ENCODE measurements at regions of chr11 and their contacts with region 1.

Region 1: GRCh38 chr11:64204464-64204989 is 2.0 kb upstream of the FERMT3 start:
- DNase-seq: peak; percentile 82
- ATAC-seq: peak; percentile 43
- H3K4me3 Mint-ChIP-seq: peak overlapping the region; percentile 43
- H3K27ac Mint-ChIP-seq: peak overlapping the region; percentile 80
- H3K4me1 Mint-ChIP-seq: peaks cover 50% of the 10 kb centered on the region
- H3K27me3 Mint-ChIP-seq: no peaks in the 10 kb centered on the region

Region 2: GRCh38 chr11:64216879-64217278 is 12.4 kb after region 1 on chr11:
- CTCF ChIA-PET with region 1: interaction called, 37 read pairs
- POLR2A ChIA-PET with region 1: interaction called, 54 read pairs
- DNase-seq: no peak
- ATAC-seq: peak; percentile 46
- H3K4me3 Mint-ChIP-seq: no peak overlapping the region
- H3K27ac Mint-ChIP-seq: no peak overlapping the region
- H3K4me1 Mint-ChIP-seq: peaks cover 13% of the 10 kb centered on the region
- H3K27me3 Mint-ChIP-seq: no peaks in the 10 kb centered on the region

Region 3: GRCh38 chr11:64233913-64234834 is 29.6 kb after region 1 on chr11 and contains the start of gene VEGFB:
- CTCF ChIA-PET with region 1: interaction called, 40 read pairs
- POLR2A ChIA-PET with region 1: interaction called, 14 read pairs
- DNase-seq: peak; percentile 75
- ATAC-seq: peak; percentile 50
- H3K4me3 Mint-ChIP-seq: peak within 1 kb of the TSS; percentile 91
- H3K27ac Mint-ChIP-seq: peak within 1 kb of the TSS; percentile 81
- H3K4me1 Mint-ChIP-seq: peaks cover 47% of the 10 kb centered on the region
- H3K27me3 Mint-ChIP-seq: no peaks in the 10 kb centered on the region
- total RNA-seq, gene VEGFB: 81.5 to 87.8 TPM

Region 4: DNA sequence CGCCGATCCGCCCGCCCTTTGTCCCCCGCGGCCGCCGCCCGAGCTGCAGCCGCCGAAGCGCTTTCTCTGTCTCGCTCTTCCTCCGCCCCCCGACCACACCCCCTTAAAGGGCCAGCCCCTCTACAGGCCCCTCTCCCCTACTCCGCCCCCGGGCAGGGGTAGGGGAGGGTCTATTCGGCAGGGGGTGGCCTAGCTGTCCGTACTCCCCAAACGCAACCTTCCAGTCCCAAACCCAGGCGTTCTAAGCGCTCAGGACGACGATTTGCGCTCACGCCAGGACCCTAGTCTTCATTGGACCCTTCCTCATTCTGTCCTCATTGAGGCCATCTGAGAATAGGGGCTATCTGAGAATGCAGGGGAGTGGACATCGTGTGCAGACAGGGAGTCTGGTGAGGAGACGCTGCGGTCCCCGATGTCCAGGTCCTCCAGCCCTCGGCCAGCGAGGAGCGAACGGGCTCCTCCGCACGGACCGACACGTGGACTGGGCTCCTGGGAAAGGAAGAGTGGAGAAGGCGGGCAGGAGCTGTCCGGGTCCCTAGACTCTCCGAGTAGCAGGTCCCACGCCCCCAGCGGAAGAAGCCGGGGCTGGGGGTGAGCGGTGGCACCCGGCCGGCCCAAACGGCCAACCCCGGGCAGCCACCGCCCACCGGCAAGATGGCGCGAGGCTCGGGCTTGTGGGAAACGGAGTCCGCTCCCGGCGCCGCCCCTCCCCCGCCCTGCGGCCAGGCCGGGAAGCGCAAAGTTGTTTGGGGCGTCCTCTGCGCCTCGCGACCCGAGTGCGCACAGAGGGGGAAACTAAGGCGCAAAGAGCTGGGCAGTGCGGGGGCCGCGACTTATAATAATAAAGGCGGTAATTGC is 42.6 kb after region 1 on chr11 and contains the start of gene PPP1R14B:
- CTCF ChIA-PET with region 1: interaction called, 57 read pairs
- POLR2A ChIA-PET with region 1: interaction called, 39 read pairs
- DNase-seq: peak; percentile 85
- ATAC-seq: peak; percentile 61
- H3K4me3 Mint-ChIP-seq: peak within 1 kb of the TSS; percentile 88
- H3K27ac Mint-ChIP-seq: peak within 1 kb of the TSS; percentile 85
- H3K4me1 Mint-ChIP-seq: peaks cover 53% of the 10 kb centered on the region
- H3K27me3 Mint-ChIP-seq: no peaks in the 10 kb centered on the region
- total RNA-seq, gene PPP1R14B: 178 to 197 TPM

Region 5: GRCh38 chr11:64284048-64284961 is 79.8 kb after region 1 on chr11 and contains the start of gene BAD:
- CTCF ChIA-PET with region 1: interaction called, 23 read pairs
- POLR2A ChIA-PET with region 1: interaction called, 10 read pairs
- DNase-seq: peak; percentile 95
- ATAC-seq: peak; percentile 86
- H3K4me3 Mint-ChIP-seq: peak within 1 kb of the TSS; percentile 81
- H3K27ac Mint-ChIP-seq: peak within 1 kb of the TSS; percentile 89
- H3K4me1 Mint-ChIP-seq: peaks cover 25% of the 10 kb centered on the region
- H3K27me3 Mint-ChIP-seq: no peaks in the 10 kb centered on the region
- total RNA-seq, gene BAD: 38.3 to 43.9 TPM

Region 6: GRCh38 chr11:64331557-64332371 is 127.2 kb after region 1 on chr11:
- CTCF ChIA-PET with region 1: interaction called, 13 read pairs
- POLR2A ChIA-PET with region 1: interaction called, 3 read pairs
- DNase-seq: peak; percentile 89
- ATAC-seq: peak; percentile 95
- H3K4me3 Mint-ChIP-seq: peak overlapping the region; percentile 1
- H3K27ac Mint-ChIP-seq: peak overlapping the region; percentile 86
- H3K4me1 Mint-ChIP-seq: peaks cover 38% of the 10 kb centered on the region
- H3K27me3 Mint-ChIP-seq: peaks cover 2% of the 10 kb centered on the region

Measured in activated CD8-positive, alpha-beta T cell treated with anti-CD3 and anti-CD28 coated beads, Interleukin-2, amount 10 ng/mL, durations not matched to agents 7 days and 5 days (primary cell).